CD8-positive, alpha-beta memory T cell (primary cell): ENCODE measurements at regions of chr13 and their contacts with region 1.

Region 1: GRCh38 chr13:95403828-95404522 is 102.7 kb upstream of the ABCC4 start:
- DNase-seq: peak; percentile 58 to 81 (median 64)
- H3K4me3 ChIP-seq: peak overlapping the region; percentile 73
- H3K4me3 Mint-ChIP-seq: peak overlapping the region; percentile 66 to 92 (median 91)
- H3K27ac ChIP-seq: no peak overlapping the region
- H3K27ac Mint-ChIP-seq: peak overlapping the region in 5 of 8 donors; percentile 12 to 87 (median 78)
- H3K4me1 ChIP-seq: no peaks in the 10 kb centered on the region
- H3K4me1 Mint-ChIP-seq: peaks cover 8 to 13% (median 13%) of the 10 kb centered on the region in 3 donors
- H3K27me3 ChIP-seq: no peaks in the 10 kb centered on the region
- H3K27me3 Mint-ChIP-seq: peaks cover 2 to 16% of the 10 kb centered on the region in 2 donors

Region 2: DNA sequence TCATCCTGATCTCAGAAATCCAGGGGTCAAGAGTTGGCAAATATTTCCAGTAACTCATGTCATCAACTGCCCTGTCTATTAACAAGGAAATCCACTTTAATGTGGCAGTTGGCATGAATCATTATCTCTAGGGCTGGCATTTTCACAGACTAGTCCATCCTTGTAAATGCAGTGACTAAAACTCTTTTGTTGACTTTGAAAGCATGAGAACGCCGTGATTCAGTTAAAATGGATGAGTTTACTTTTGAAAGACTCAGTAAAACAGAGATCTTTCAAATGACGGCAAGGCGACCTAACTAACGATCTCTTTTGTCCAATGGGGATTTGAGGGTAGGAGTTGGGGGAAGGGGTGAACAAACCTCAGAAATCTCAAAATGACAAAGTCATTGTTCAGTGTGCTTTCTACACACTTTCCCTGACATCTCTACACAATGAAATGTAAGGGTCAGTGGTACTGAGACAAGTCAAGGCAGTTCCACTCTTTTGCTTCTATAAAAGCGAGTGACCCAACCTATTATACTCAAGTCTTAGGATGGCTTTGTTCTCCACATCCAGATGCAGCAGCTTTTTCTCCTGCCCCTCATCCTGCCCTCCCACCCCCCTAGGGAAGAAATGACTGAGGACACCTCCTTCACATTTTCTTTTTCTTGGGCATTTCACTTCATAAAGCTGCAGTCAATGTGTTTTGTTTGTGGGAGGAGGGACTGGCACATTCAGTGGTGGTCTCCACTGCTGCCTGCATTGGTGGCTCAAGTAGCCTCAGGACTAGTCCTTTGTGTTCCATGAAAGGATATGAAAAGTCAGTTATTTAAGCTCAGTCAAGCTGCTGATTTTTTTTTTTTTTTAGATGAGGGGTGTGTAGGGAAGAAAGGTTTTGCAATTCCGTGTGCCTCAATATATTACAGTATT is 303.2 kb before region 1 on chr13:
- CTCF ChIA-PET with region 1: no interaction called
- POLR2A ChIA-PET with region 1: no interaction called
- DNase-seq: no peak
- H3K4me3 ChIP-seq: no peak overlapping the region
- H3K4me3 Mint-ChIP-seq: no peak overlapping the region
- H3K27ac ChIP-seq: no peak overlapping the region
- H3K27ac Mint-ChIP-seq: peak overlapping the region in 1 of 8 donors; percentile 32
- H3K4me1 ChIP-seq: no peaks in the 10 kb centered on the region
- H3K4me1 Mint-ChIP-seq: no peaks in the 10 kb centered on the region
- H3K27me3 ChIP-seq: no peaks in the 10 kb centered on the region
- H3K27me3 Mint-ChIP-seq: no peaks in the 10 kb centered on the region

Region 3: DNA sequence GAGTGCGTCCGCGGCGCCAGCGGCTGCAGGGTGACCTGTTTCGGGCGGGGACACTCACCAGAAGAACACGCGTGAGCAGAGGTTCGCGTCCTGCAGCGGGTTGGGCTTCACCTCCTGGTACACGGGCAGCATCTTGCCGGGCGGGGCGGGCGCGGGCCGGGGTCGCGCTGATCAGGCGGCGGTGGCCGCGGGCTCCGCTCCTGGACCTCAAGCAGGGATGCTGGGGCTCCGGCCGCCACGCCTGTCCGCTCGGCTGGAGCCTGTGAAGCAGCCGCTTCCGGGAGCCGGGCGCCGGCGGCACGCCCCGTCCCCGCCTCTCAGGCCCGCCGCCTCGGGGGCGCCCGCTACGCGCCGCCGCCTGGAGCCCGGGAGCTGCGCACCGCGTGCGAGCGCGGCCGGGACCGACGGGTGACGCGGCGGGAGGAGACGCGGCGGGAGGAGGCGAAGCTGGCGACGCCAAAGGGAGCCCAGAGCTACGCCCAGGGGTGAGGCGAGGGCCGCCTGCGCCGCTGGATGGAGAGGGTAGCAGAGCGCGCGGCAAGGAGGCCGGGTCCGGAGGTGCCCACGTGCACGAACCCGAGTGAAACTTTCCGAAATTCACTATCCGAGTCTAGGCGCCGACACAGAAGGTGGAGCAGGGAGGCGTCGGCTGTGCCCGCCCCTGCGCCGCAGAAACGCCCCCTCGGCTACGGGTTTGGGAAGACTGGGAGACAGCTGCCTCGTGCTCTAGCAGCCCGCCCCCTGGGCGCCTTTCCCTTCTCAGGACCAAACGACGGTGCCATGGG is 102.6 kb before region 1 on chr13 and contains the start of gene ABCC4:
- CTCF ChIA-PET with region 1: interaction called, 60 read pairs
- POLR2A ChIA-PET with region 1: no interaction called
- DNase-seq: peak; percentile 12 to 59 (median 48)
- H3K4me3 ChIP-seq: peak within 1 kb of the TSS; percentile 85
- H3K4me3 Mint-ChIP-seq: peak within 1 kb of the TSS; percentile 89 to 96 (median 90)
- H3K27ac ChIP-seq: peak within 1 kb of the TSS; percentile 25
- H3K27ac Mint-ChIP-seq: peak within 1 kb of the TSS in 7 of 8 donors; percentile 41 to 90 (median 78)
- H3K4me1 ChIP-seq: peaks cover 13% of the 10 kb centered on the region
- H3K4me1 Mint-ChIP-seq: peaks cover 23 to 34% (median 33%) of the 10 kb centered on the region in 3 donors
- H3K27me3 ChIP-seq: no peaks in the 10 kb centered on the region
- H3K27me3 Mint-ChIP-seq: peaks cover 0 to 5% of the 10 kb centered on the region in 2 donors
- total RNA-seq, gene ABCC4: 11.2 to 12.5 TPM

Region 4: DNA sequence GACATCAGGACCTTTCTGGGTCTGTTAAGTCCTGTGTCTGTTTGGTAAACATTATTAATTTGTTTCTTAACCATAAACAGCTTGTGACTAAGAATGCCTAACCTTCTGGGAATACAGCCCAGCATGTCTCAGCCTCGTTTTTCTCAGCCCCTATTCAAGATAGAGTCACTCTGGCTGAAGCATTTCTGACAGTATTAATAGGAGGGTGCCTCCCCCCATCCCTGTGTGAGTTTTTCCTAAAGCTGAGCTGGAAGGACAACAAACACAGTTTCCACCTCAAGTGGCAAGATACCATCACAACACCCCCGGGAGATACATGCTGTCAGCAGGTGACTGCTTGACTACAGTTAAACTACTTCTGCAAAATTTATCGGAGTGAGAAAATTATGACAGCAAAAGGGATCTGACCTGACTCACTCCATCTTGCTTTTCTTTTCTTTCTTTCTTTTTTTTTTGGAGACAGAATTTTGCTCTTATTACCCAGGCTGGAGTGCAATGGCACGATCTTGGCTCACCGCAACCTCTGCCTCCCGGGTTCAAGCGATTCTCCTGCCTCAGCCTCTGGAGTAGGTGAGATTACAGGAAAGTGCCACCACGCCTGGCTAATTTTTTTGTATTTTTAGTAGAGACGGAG is 43.4 kb before region 1 on chr13:
- CTCF ChIA-PET with region 1: no interaction called
- POLR2A ChIA-PET with region 1: no interaction called
- DNase-seq: no peak
- H3K4me3 ChIP-seq: no peak overlapping the region
- H3K4me3 Mint-ChIP-seq: no peak overlapping the region
- H3K27ac ChIP-seq: no peak overlapping the region
- H3K27ac Mint-ChIP-seq: no peak overlapping the region
- H3K4me1 ChIP-seq: no peaks in the 10 kb centered on the region
- H3K4me1 Mint-ChIP-seq: no peaks in the 10 kb centered on the region
- H3K27me3 ChIP-seq: no peaks in the 10 kb centered on the region
- H3K27me3 Mint-ChIP-seq: peaks cover 16 to 24% of the 10 kb centered on the region in 2 donors

Region 5: DNA sequence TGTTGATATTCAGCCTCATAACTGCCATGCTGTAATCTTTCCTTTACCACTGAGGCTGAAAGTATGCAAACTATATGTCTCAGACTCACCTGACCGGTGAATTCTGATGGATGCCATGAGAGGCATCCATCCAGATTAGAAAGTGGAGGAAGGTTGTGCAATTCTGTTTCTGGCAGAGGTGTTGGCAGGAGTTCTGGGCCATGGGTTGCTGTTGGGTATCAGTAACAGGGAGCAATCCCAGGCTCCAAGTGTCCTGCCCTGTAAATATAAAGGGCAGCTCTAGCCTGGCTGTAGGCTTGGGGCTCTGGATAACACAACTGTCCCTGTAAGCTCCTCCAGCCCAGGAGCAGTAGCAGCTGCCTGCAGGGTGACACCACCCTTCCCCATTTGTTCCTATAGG is 25.4 kb before region 1 on chr13:
- CTCF ChIA-PET with region 1: interaction called, 10 read pairs
- POLR2A ChIA-PET with region 1: no interaction called
- DNase-seq: no peak
- H3K4me3 ChIP-seq: no peak overlapping the region
- H3K4me3 Mint-ChIP-seq: no peak overlapping the region
- H3K27ac ChIP-seq: no peak overlapping the region
- H3K27ac Mint-ChIP-seq: no peak overlapping the region
- H3K4me1 ChIP-seq: no peaks in the 10 kb centered on the region
- H3K4me1 Mint-ChIP-seq: peaks cover 4 to 5% (median 5%) of the 10 kb centered on the region in 3 donors
- H3K27me3 ChIP-seq: no peaks in the 10 kb centered on the region
- H3K27me3 Mint-ChIP-seq: peaks cover 10 to 20% of the 10 kb centered on the region in 2 donors

Region 6: GRCh38 chr13:95391362-95391761 is 12.6 kb before region 1 on chr13:
- CTCF ChIA-PET with region 1: interaction called, 11 read pairs
- POLR2A ChIA-PET with region 1: no interaction called
- DNase-seq: no peak
- H3K4me3 ChIP-seq: no peak overlapping the region
- H3K4me3 Mint-ChIP-seq: no peak overlapping the region
- H3K27ac ChIP-seq: no peak overlapping the region
- H3K27ac Mint-ChIP-seq: no peak overlapping the region
- H3K4me1 ChIP-seq: no peaks in the 10 kb centered on the region
- H3K4me1 Mint-ChIP-seq: no peaks in the 10 kb centered on the region
- H3K27me3 ChIP-seq: no peaks in the 10 kb centered on the region
- H3K27me3 Mint-ChIP-seq: peaks cover 11 to 50% of the 10 kb centered on the region in 2 donors

Region 7: DNA sequence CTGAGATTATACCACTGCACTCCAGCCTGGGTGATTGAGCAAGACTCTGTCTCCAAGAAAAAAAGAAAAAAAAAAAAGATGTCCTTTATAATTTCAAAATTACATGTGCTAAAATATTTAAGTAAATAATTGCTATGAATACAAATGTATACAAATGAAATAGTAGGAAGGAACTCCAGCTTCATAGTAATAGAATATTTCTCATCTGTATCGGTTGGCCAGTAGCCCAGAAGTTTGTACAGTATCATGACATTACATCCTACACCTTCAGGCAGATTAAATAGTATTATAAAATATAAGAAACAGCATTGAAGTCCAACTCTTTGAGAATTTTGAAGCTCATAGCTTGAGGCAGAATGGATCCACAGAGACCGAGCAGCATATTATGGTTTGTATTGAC is 112.0 kb after region 1 on chr13:
- CTCF ChIA-PET with region 1: no interaction called
- POLR2A ChIA-PET with region 1: no interaction called
- DNase-seq: no peak
- H3K4me3 ChIP-seq: no peak overlapping the region
- H3K4me3 Mint-ChIP-seq: no peak overlapping the region
- H3K27ac ChIP-seq: no peak overlapping the region
- H3K27ac Mint-ChIP-seq: no peak overlapping the region
- H3K4me1 ChIP-seq: no peaks in the 10 kb centered on the region
- H3K4me1 Mint-ChIP-seq: no peaks in the 10 kb centered on the region
- H3K27me3 ChIP-seq: no peaks in the 10 kb centered on the region
- H3K27me3 Mint-ChIP-seq: peaks cover 7 to 30% of the 10 kb centered on the region in 2 donors